ENCODE measurements at regions of chr7 and their contacts with region 1.

Region 1: GRCh38 chr7:137791930-137792329 is 54.8 kb downstream of the DGKI start:
- DNase-seq: no peak
- H3K4me3 ChIP-seq: no peak overlapping the region
- H3K27ac ChIP-seq: no peak overlapping the region
- H3K4me1 ChIP-seq: peaks cover 0 to 6% of the 10 kb centered on the region in 2 donors
- H3K27me3 ChIP-seq: no peaks in the 10 kb centered on the region
- CTCF ChIP-seq: no peak

Region 2: DNA sequence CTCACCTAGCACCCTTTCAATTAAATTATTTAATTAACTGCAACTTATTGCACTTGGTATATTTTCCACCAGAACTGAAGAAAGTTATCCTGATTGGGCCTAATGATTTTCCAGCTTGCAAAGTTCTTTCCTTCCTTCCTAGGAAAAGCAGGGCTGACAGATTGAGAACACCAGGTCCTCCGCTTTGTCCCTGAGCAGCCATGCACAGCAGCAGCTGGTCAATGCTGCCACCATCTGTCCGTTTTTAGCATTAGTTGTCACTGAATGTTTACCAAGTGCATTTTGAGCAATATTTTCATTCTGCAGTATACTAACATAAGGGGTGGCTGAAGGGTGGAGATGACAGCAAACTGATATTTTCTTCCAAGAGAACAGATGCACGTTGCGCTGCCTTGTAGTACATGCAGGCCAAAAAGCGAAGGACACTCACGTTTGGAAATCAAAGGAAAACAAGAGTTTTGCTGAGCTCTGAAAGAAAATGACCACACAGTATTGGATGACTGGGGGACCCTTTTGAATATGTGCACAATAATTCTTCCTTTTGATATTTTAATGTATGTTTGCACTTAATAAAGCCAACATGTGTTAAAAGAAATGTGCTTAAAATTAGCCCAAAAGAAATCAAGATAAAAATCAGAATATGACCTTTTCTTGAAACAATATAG is 199.6 kb before region 1 on chr7:
- intact Hi-C with region 1: no loop called
- DNase-seq: peak in 1 of 2 donors; percentile 70
- H3K4me3 ChIP-seq: no peak overlapping the region
- H3K27ac ChIP-seq: peak overlapping the region in 1 of 2 donors; percentile 21
- H3K4me1 ChIP-seq: peaks cover 0 to 3% of the 10 kb centered on the region in 2 donors
- H3K27me3 ChIP-seq: no peaks in the 10 kb centered on the region
- CTCF ChIP-seq: peak; percentile 37 to 74 (median 60)

Region 3: DNA sequence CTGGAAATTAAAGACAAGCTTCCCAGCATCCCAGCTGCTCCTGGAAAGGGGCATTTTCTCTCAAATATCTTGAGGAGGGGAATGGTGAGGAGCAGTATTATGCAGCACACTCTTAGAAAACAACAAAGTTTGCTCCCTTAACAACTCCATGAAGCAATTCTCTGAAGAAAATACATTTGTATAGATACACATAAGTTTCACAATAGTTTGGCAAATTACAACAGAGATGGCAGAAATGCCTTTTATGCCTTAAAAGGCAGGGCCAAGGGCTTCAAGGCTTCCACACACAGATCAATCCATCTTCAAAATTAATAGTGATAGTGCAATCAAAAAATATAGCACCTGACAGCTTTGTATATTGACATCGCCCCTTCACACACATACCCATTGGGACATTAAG is 42.6 kb after region 1 on chr7:
- intact Hi-C with region 1: loop called (anchors 5 kb)
- DNase-seq: no peak
- H3K4me3 ChIP-seq: no peak overlapping the region
- H3K27ac ChIP-seq: peak overlapping the region in 1 of 2 donors; percentile 69
- H3K4me1 ChIP-seq: peaks cover 10 to 36% of the 10 kb centered on the region in 2 donors
- H3K27me3 ChIP-seq: no peaks in the 10 kb centered on the region
- CTCF ChIP-seq: no peak